ENCODE measurements at regions of chr5 and their contacts with region 1.

Region 1: DNA sequence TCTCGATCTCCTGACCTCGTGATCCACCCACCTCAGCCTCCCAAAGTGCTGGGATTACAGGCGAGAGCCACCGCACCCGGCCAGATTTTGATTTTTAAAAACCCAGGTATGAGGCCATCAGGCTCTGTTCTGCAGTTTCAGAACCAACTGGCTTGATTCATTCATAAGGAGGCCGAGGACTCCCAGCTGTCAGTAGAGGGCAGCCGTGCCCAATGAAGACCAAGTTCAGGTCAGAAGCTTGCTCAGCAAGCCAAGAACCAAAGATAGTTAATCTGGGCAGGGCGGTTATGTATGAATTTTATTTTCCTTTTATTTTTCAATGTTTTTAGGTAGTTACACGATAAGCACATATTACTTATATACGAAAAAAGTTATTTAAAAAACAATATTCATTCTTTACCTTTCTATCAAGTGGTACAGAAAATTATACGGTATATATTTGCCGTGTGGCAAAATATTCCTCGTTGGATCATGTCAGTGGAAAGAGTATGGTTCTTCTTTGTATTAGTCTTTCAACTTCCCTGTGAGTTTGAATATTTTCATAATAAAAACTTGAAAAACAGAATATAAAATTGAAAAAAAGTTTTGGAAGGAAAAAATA is 18.0 kb downstream of the MGAT1 start:
- DNase-seq: peak; percentile 68
- ATAC-seq: peak; percentile 86
- H3K4me3 ChIP-seq: no peak overlapping the region
- H3K27ac ChIP-seq: no peak overlapping the region
- H3K4me1 ChIP-seq: peaks cover 9 to 10% of the 10 kb centered on the region in 2 experiments; a peak in 3 of 4 replicates
- H3K27me3 ChIP-seq: no peaks in the 10 kb centered on the region
- CTCF ChIP-seq: peak; percentile 65 to 81 (median 74)
- POLR2A ChIP-seq: no peak
- RAD21 ChIP-seq: peak; percentile 90

Region 2: DNA sequence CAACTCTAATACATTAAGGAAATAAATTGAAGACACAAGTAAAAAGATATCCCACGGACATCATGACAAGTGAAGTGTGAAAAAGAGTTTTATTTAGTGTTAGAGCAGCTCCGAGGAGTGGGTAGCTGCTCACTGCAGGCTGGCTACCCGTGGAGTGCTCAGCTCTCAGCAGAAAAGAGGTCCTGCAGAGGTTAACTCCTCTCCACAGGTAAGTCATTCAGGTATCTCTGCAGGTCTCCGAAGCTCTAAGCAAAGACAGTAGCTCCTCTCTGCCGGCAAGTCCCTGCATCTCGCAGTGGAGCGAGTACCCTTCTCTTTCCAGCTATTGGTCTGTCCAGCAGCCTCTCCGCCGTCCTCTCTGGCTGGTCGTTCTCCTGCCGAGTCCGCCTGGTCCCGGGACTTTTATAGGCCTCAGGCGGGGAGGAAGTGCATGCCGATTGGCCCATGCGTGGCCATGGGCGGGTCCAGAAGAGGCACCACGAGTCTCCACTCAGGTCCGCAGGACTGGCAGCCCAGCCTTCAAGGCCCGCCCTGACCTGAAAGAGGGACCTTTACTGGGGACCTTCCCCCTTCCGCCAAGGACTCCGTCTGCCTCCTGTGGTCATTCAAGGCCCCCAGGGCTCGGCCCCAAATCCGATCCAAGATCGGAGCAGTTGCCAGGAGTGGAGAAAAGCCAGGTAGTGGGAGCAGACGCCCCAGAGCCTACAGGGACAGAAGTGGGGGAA is 285.3 kb after region 1 on chr5:
- CTCF ChIA-PET with region 1: no interaction called
- POLR2A ChIA-PET with region 1: no interaction called
- RAD21 ChIA-PET with region 1: no interaction called
- intact Hi-C with region 1: loop called (anchors 10 kb)
- DNase-seq: no peak
- ATAC-seq: peak; percentile 69; the same call in 1 of the 2 replicates
- H3K4me3 ChIP-seq: no peak overlapping the region
- H3K27ac ChIP-seq: no peak overlapping the region
- H3K4me1 ChIP-seq: no peaks in the 10 kb centered on the region
- H3K27me3 ChIP-seq: no peaks in the 10 kb centered on the region
- CTCF ChIP-seq: no peak
- POLR2A ChIP-seq: no peak
- RAD21 ChIP-seq: no peak

Region 3: DNA sequence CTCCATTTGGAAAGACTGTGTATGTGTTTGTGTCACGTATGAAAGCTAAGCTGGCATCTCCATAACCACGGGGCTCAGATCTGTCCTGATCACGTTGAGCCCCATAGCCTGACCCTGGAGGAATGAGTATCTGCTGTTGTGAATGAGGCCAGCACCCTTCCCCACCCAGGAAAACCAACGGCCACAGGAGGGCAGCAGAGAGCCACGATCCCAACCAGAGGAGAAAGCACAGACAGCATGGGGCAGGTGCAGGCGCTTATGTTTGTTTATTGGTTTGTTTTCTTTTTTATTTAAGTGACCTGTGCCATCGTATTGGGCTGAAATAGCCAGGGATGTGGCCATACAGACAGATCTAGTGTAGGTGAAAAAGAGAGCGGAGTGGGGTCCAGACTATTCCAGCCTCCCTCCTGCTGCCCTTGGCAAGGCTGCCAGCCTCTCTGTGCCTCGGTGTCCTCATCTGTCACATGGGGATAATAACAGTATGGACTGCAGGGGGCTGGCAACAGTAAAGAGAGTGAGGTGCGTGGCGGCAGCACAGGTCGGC is 374.8 kb after region 1 on chr5:
- CTCF ChIA-PET with region 1: no interaction called
- POLR2A ChIA-PET with region 1: no interaction called
- RAD21 ChIA-PET with region 1: no interaction called
- intact Hi-C with region 1: loop called (anchors 1 kb)
- DNase-seq: peak; percentile 73
- ATAC-seq: peak; percentile 85
- H3K4me3 ChIP-seq: no peak overlapping the region
- H3K27ac ChIP-seq: peak overlapping the region; percentile 77; the same call in 1 of the 2 replicates
- H3K4me1 ChIP-seq: peaks cover 12 to 34% of the 10 kb centered on the region in 2 experiments
- H3K27me3 ChIP-seq: no peaks in the 10 kb centered on the region
- CTCF ChIP-seq: peak; percentile 91 to 96 (median 91)
- POLR2A ChIP-seq: no peak
- RAD21 ChIP-seq: peak; percentile 92